Activated naive CD8-positive, alpha-beta T cell treated with anti-CD3 and anti-CD28 coated beads, Interleukin-2, amount 10 ng/mL, durations not matched to agents 7 days and 5 days (primary cell): ENCODE measurements at regions of chrX and their contacts with region 1.

Region 1: GRCh38 chrX:76172325-76172893 is 453 bp upstream of the PBDC1 start:
- DNase-seq: no peak
- ATAC-seq: peak; percentile 49
- H3K4me3 Mint-ChIP-seq: peak overlapping the region; percentile 95
- H3K27ac Mint-ChIP-seq: peak overlapping the region; percentile 94
- H3K4me1 Mint-ChIP-seq: peaks cover 44% of the 10 kb centered on the region
- H3K27me3 Mint-ChIP-seq: no peaks in the 10 kb centered on the region

Region 2: GRCh38 chrX:76109654-76110053 is 62.8 kb before region 1 on chrX:
- POLR2A ChIA-PET with region 1: no interaction called
- DNase-seq: no peak
- ATAC-seq: no peak
- H3K4me3 Mint-ChIP-seq: no peak overlapping the region
- H3K27ac Mint-ChIP-seq: no peak overlapping the region
- H3K4me1 Mint-ChIP-seq: no peaks in the 10 kb centered on the region
- H3K27me3 Mint-ChIP-seq: peaks cover 4% of the 10 kb centered on the region

Region 3: GRCh38 chrX:76183289-76184049 is 11.1 kb after region 1 on chrX:
- POLR2A ChIA-PET with region 1: interaction called, 12 read pairs
- DNase-seq: no peak
- ATAC-seq: no peak
- H3K4me3 Mint-ChIP-seq: no peak overlapping the region
- H3K27ac Mint-ChIP-seq: no peak overlapping the region
- H3K4me1 Mint-ChIP-seq: peaks cover 20% of the 10 kb centered on the region
- H3K27me3 Mint-ChIP-seq: no peaks in the 10 kb centered on the region

Region 4: DNA sequence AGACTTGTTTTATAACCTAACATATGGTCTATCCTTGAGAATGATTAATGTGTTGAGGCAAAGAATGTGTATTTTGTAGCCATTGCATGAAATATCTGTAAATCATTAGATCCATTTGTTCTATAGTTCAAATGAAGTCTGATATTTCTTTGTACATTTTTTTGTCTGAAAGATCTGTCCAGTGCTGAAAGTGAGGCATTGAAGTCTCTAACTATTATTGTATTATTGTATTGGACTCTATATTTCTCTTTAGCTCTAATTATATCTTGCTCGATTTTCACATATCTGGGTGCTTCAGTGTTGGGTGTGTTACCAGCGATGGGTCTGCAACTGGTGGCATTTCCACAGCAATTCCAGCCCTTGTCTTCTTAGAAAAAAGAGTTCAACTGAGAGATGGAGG is 76.5 kb after region 1 on chrX:
- POLR2A ChIA-PET with region 1: no interaction called
- DNase-seq: no peak
- ATAC-seq: no peak
- H3K4me3 Mint-ChIP-seq: no peak overlapping the region
- H3K27ac Mint-ChIP-seq: no peak overlapping the region
- H3K4me1 Mint-ChIP-seq: peaks cover 1% of the 10 kb centered on the region
- H3K27me3 Mint-ChIP-seq: peaks cover 13% of the 10 kb centered on the region